ENCODE measurements at regions of chr6 and their contacts with region 1.

Region 1: DNA sequence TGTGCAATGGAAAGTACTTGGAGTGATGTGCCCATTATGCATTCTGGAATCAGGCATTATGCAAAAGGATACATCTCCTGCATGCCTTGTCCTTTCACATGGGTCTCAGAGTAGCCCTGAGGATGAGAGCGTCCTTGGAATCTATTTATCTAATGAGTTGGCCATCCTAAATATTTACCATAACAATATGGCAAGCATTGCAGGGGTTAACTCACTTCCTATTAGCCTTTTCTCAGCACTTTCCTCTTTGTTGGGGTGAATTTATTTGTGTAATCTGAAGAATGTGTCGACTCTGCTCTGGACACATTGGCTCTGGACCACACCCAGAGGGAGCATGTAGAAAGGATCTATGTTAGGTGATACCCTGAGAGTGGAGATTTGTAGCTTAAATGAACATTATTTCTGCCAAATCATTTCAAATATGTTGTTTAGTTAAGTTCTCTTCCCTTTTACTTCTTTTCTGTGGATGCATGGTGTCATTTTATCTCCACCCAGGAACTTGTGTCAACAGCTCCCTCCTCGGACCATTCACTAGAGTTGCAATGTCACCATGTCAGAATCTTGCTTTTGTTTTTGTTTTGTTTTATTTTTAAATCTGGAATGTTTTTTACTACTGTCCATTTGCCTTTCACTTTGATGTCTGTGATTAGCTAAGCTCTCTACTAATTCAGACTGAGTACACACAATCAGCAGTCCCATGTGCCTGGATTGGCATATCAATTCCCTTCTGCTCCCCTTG is 757.0 kb upstream of the MMS22L start:
- DNase-seq: peak; percentile 12
- H3K4me3 Mint-ChIP-seq: no peak overlapping the region
- H3K27ac Mint-ChIP-seq: no peak overlapping the region
- H3K4me1 Mint-ChIP-seq: no peaks in the 10 kb centered on the region
- H3K27me3 Mint-ChIP-seq: peaks cover 68% of the 10 kb centered on the region
- CTCF ChIP-seq: peak; percentile 49

Region 2: DNA sequence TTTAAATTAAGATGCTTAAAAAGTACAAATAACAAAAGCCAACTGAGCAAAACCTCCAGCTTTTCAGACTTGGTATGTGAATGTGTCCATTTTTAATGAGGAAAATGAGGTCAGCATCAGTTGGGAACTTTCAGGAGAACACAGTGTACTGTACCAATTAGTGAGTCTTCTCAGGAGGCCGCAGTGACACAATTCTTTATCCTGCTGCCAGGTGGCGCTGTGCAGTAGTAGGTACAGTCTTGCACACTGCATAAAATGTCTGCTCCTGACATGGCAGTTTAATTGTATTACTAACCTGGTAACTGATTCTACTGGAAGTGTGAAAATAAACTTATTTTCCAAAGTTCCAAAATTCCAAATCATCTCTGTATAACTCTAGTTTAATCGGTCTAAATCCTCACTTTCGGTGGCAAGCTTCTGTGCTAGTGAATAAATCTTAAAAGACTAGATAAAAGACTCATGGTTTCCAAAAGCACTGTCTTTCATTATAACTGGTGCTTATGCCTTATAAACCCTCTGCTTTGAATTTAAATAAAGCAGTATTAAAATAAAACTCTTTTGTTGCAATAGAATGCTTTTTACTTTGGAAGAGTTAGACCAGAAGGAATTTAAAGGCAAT is 542.2 kb before region 1 on chr6:
- CTCF ChIA-PET with region 1: interaction called, 3 read pairs
- POLR2A ChIA-PET with region 1: no interaction called
- intact Hi-C with region 1: loop called (anchors 1 kb)
- DNase-seq: peak; percentile 72
- H3K4me3 Mint-ChIP-seq: no peak overlapping the region
- H3K27ac Mint-ChIP-seq: no peak overlapping the region
- H3K4me1 Mint-ChIP-seq: no peaks in the 10 kb centered on the region
- H3K27me3 Mint-ChIP-seq: peaks cover 53% of the 10 kb centered on the region
- CTCF ChIP-seq: peak; percentile 81

Region 3: GRCh38 chr6:97586344-97586743 is 453.7 kb before region 1 on chr6:
- CTCF ChIA-PET with region 1: no interaction called
- POLR2A ChIA-PET with region 1: no interaction called
- intact Hi-C with region 1: loop called (anchors 5 kb)
- DNase-seq: peak; percentile 14
- H3K4me3 Mint-ChIP-seq: no peak overlapping the region
- H3K27ac Mint-ChIP-seq: no peak overlapping the region
- H3K4me1 Mint-ChIP-seq: no peaks in the 10 kb centered on the region
- H3K27me3 Mint-ChIP-seq: peaks cover 96% of the 10 kb centered on the region
- CTCF ChIP-seq: no peak

Region 4: DNA sequence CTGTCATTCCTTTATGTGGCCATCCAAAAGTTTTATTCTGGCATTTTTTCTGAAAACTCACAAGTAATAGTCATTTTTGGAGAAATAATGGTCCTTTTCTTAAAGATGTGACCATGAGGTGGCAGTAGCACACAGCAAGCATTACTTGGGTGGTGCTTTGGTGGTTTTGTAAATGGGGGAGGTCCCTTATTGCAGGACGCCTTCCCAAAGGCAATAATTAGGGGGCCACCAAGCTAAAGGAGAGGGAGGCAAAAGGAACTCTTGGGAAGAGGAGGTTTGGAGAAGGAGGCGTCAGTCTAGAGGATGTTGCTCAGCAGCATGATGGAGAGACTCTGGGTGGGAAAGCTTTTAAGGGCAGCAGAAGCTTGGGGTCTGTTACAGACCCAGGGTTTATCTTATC is 334.5 kb before region 1 on chr6:
- CTCF ChIA-PET with region 1: no interaction called
- POLR2A ChIA-PET with region 1: no interaction called
- intact Hi-C with region 1: loop called (anchors 1 kb)
- DNase-seq: peak; percentile 14
- H3K4me3 Mint-ChIP-seq: no peak overlapping the region
- H3K27ac Mint-ChIP-seq: no peak overlapping the region
- H3K4me1 Mint-ChIP-seq: no peaks in the 10 kb centered on the region
- H3K27me3 Mint-ChIP-seq: peaks cover 50% of the 10 kb centered on the region
- CTCF ChIP-seq: peak; percentile 51

Region 5: DNA sequence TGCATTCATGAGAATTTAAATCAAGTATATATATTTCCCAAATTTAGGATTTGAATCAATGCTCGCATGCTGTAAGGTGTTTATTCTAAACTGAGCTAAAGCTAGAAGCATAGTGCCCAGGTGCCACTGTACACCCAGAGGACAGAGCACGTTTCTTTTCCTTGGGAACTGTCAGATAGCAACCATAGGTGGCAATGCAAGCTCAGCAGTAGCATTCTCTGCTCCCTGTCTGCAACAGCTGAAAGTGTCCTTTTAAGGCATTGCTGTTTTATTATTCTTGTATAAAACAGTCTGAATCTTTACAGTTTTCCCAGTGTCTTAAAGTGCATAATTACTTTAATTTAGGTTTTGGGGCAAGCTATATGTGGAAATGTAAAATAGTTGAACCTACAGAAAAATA is 313.7 kb before region 1 on chr6:
- CTCF ChIA-PET with region 1: interaction called, 3 read pairs
- POLR2A ChIA-PET with region 1: no interaction called
- intact Hi-C with region 1: loop called (anchors 5 kb)
- DNase-seq: peak; percentile 12
- H3K4me3 Mint-ChIP-seq: no peak overlapping the region
- H3K27ac Mint-ChIP-seq: no peak overlapping the region
- H3K4me1 Mint-ChIP-seq: no peaks in the 10 kb centered on the region
- H3K27me3 Mint-ChIP-seq: peaks cover 29% of the 10 kb centered on the region
- CTCF ChIP-seq: peak; percentile 10

Region 6: GRCh38 chr6:99285881-99286280 is 1245.8 kb after region 1 on chr6:
- CTCF ChIA-PET with region 1: no interaction called
- POLR2A ChIA-PET with region 1: no interaction called
- intact Hi-C with region 1: no loop called
- DNase-seq: no peak
- H3K4me3 Mint-ChIP-seq: no peak overlapping the region
- H3K27ac Mint-ChIP-seq: no peak overlapping the region
- H3K4me1 Mint-ChIP-seq: no peaks in the 10 kb centered on the region
- H3K27me3 Mint-ChIP-seq: no peaks in the 10 kb centered on the region
- CTCF ChIP-seq: no peak